ENCODE measurements at regions of chr22 and their contacts with region 1.

Region 1: GRCh38 chr22:41237707-41238569 is 2.8 kb downstream of the CHADL start:
- DNase-seq: peak; percentile 87
- H3K4me3 Mint-ChIP-seq: peak overlapping the region; percentile 58
- H3K27ac Mint-ChIP-seq: no peak overlapping the region
- H3K4me1 Mint-ChIP-seq: peaks cover 6% of the 10 kb centered on the region
- H3K27me3 Mint-ChIP-seq: peaks cover 2% of the 10 kb centered on the region

Region 2: DNA sequence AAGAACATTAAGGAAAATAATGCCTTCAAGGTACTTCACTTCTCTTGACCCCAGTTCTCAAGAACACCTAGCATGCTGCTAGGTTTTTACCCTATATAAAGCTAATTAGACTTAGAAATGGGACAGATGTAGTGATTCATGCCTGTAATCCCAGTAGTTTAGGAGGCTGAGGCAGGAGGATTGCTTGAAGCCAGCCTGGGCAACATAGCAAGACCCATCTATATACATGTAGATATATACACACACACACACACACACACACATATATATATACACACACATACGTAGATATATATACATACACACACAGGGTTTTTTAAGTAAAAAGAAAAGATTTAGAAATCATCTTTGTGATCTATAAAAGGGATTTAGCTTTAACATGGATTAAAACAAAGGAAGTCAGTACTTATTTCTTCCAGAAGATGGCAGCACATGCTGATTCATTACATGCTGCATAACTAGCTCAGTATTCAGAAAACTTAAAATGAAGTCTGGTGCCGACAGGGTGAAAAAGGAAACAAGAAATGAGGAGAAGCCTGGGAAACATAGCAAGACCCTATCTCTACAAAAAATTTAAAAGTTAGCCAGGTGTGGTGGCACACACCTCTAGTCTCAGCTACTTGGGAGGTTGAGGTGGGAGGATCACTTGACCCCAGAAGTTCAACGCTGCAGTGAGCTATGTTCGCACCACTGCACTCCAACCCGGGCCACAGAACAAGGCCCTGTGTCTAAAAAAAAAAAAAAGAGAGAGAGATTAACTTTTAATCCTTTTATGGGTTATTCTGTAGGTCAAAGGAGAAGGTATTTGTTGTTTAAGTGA is 315.2 kb before region 1 on chr22:
- CTCF ChIA-PET with region 1: interaction called, 38 read pairs
- POLR2A ChIA-PET with region 1: interaction called, 7 read pairs
- DNase-seq: peak; percentile 62
- H3K4me3 Mint-ChIP-seq: no peak overlapping the region
- H3K27ac Mint-ChIP-seq: peak overlapping the region; percentile 22
- H3K4me1 Mint-ChIP-seq: peaks cover 4% of the 10 kb centered on the region
- H3K27me3 Mint-ChIP-seq: no peaks in the 10 kb centered on the region

Region 3: GRCh38 chr22:40928657-40929056 is 309.3 kb before region 1 on chr22:
- CTCF ChIA-PET with region 1: interaction called, 38 read pairs
- POLR2A ChIA-PET with region 1: no interaction called
- DNase-seq: no peak
- H3K4me3 Mint-ChIP-seq: no peak overlapping the region
- H3K27ac Mint-ChIP-seq: no peak overlapping the region
- H3K4me1 Mint-ChIP-seq: no peaks in the 10 kb centered on the region
- H3K27me3 Mint-ChIP-seq: no peaks in the 10 kb centered on the region

Region 4: GRCh38 chr22:41140365-41140957 is 97.5 kb before region 1 on chr22:
- CTCF ChIA-PET with region 1: no interaction called
- POLR2A ChIA-PET with region 1: no interaction called
- DNase-seq: no peak
- H3K4me3 Mint-ChIP-seq: no peak overlapping the region
- H3K27ac Mint-ChIP-seq: peak overlapping the region; percentile 25
- H3K4me1 Mint-ChIP-seq: no peaks in the 10 kb centered on the region
- H3K27me3 Mint-ChIP-seq: no peaks in the 10 kb centered on the region

Region 5: DNA sequence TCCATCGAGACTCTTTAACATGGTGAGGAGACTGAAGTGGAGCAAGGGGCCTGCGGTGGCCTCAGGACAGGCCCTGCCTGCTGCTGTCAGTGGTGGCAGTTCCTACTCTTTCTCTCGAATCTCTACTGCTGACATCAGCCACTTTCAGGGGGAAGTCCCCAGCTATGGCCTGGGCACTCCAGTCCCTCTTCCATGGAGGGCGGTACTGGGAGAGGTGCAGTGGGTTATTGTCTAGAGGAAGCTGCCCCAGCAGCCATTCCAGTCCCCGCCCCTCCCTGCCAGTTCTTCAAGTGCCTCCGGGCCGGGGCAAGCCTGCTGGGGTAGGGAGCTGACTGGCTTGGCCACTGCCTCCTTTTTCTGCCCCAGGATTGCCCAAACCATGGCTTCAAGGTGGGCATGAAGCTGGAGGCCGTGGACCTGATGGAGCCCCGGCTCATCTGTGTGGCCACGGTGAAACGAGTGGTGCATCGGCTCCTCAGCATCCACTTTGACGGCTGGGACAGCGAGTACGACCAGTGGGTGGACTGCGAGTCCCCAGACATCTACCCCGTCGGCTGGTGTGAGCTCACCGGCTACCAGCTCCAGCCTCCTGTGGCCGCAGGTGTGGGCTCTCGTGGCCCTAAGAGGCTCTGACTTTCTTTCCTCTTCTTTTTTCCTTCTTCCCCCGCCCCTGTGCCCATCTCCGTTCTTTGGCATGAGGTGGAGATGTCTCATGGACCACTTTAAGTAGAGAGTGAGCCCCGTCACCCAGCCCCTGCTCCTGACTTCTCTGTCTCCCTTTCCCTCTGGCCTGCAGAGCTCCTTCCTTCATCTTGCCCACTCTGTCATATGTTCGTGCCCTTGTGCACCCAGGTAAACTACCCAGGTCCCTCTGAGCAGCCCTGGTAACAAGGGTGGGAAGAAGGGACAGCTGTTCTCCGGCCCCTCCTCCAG is 10.9 kb before region 1 on chr22:
- CTCF ChIA-PET with region 1: interaction called, 17 read pairs
- POLR2A ChIA-PET with region 1: interaction called, 3 read pairs
- DNase-seq: no peak
- H3K4me3 Mint-ChIP-seq: no peak overlapping the region
- H3K27ac Mint-ChIP-seq: no peak overlapping the region
- H3K4me1 Mint-ChIP-seq: no peaks in the 10 kb centered on the region
- H3K27me3 Mint-ChIP-seq: no peaks in the 10 kb centered on the region

Region 6: DNA sequence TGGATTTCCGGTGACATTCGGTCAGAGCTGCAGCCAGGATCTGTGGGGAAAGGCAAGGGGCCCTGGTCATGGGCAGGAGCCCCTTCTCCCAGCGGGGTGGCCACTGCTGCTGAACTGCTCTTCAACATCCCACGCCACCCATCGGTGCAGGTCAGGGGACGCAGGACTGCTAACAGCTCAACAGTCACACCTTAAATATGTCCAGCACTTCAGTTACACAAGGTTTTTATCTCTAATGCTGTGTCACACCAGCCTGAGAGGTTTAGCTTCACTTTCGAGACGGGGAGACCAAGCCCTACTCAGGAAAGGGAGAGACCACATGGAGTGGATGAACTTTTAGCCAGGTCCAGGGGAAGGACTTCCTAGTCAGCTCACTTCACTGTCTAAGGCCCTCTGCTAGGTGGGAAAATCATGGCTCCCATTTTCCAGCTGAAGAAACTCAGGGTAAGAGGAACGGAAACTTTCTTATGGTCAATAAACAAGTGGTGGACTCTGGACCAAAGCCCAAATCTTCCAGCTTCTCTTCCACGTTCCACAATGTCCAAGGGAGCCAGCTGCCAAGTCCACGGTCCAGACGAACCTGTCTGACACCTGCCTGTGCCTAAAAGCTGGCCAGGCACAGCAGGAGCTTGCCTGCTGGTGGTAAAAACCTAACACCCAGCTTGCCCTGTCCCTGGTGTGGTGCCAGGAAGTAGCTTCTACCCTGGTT is 23.8 kb after region 1 on chr22:
- CTCF ChIA-PET with region 1: interaction called, 10 read pairs
- POLR2A ChIA-PET with region 1: no interaction called
- DNase-seq: no peak
- H3K4me3 Mint-ChIP-seq: no peak overlapping the region
- H3K27ac Mint-ChIP-seq: no peak overlapping the region
- H3K4me1 Mint-ChIP-seq: no peaks in the 10 kb centered on the region
- H3K27me3 Mint-ChIP-seq: no peaks in the 10 kb centered on the region

Region 7: DNA sequence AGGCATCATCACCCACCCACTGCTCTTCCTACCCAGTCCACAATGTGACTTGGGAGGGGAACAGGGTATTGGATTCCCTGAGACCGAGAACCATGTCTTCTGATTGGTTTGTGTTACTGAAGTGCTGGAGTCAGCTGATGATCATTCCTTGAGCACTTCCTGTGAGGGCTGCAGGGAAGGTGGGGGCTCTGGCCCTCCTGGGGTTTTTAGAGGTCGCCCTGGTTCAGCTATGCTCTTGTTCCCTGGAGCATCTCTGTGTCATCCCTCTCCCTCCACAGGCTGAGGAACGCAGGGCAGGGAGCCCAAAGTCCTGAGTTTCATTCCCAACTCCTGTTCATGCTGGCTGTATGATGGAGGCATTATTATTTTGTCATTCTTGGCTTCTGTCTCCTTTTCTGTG is 70.1 kb after region 1 on chr22:
- CTCF ChIA-PET with region 1: no interaction called
- POLR2A ChIA-PET with region 1: no interaction called
- DNase-seq: no peak
- H3K4me3 Mint-ChIP-seq: no peak overlapping the region
- H3K27ac Mint-ChIP-seq: no peak overlapping the region
- H3K4me1 Mint-ChIP-seq: peaks cover 29% of the 10 kb centered on the region
- H3K27me3 Mint-ChIP-seq: no peaks in the 10 kb centered on the region

Measured in activated CD4-positive, alpha-beta T cell treated with anti-CD3 and anti-CD28 coated beads, Interleukin-2, amount 10 ng/mL, durations not matched to agents 7 days and 5 days (primary cell).